ENCODE measurements at regions of chr10 and their contacts with region 1.

Region 1: DNA sequence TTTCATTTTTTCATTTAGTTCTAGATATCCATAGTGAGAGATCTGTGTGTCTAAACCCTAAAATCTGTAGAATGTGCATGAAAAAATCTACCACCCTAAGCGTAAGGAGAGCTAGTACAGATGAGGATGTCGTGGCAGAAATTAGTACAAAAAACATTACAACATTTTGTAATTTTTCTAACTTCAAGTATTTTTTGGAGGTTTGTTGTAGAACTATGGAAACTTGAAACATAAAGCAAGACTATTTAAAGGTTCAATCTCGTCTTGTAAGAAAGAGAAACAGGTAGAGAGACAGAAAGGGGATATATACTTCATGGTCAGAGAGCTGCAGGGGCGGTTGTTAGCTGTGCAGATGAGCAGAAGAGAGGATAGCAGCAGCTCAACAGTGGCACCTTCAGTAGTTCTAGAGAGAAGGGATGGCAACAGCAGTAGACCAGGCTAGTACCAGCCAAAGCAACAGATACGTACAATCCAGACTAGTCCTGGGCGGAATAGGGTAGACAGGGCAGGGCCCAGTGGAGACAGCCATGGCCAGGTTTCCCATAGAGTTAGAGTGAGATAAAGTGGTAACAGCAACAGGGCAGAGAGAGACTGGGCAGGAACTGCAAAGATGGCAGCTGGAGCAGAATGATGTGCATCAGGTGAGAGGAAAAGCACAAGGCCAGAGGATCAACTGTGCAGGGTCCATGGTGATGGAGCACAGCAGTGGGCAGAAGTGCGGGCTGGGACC is 145.2 kb downstream of the FRMD4A start:
- DNase-seq: no peak
- ATAC-seq: no peak
- H3K4me3 ChIP-seq: no peak overlapping the region
- H3K27ac ChIP-seq: no peak overlapping the region
- H3K4me1 ChIP-seq: peaks cover 0 to 4% (median 0%) of the 10 kb centered on the region in 9 donors
- H3K27me3 ChIP-seq: peaks cover 0 to 35% (median 24%) of the 10 kb centered on the region in 7 donors
- CTCF ChIP-seq: no peak

Region 2: GRCh38 chr10:13613519-13613918 is 572.0 kb before region 1 on chr10:
- intact Hi-C with region 1: no loop called
- DNase-seq: no peak
- ATAC-seq: peak in 7 of 8 donors; percentile 42 to 80 (median 65)
- H3K4me3 ChIP-seq: no peak overlapping the region
- H3K27ac ChIP-seq: no peak overlapping the region
- H3K4me1 ChIP-seq: peaks cover 0 to 15% (median 0%) of the 10 kb centered on the region in 9 donors
- H3K27me3 ChIP-seq: no peaks in the 10 kb centered on the region
- CTCF ChIP-seq: peak; percentile 25 to 65 (median 47)

Region 3: GRCh38 chr10:14137391-14137790 is 48.1 kb before region 1 on chr10:
- intact Hi-C with region 1: loop called in 1 of 10 experiments (anchors 2 kb)
- DNase-seq: no peak
- ATAC-seq: no peak
- H3K4me3 ChIP-seq: no peak overlapping the region
- H3K27ac ChIP-seq: no peak overlapping the region
- H3K4me1 ChIP-seq: peaks cover 0 to 3% (median 0%) of the 10 kb centered on the region in 9 donors
- H3K27me3 ChIP-seq: peaks cover 0 to 5% (median 0%) of the 10 kb centered on the region in 7 donors
- CTCF ChIP-seq: no peak